Upper lobe of right lung (tissue), 1 donor: ENCODE measurements at regions of chr10 and their contacts with region 1.

Region 1: GRCh38 chr10:71957546-71958275 is 6.5 kb upstream of the CHST3 start:
- DNase-seq: no peak
- ATAC-seq: no peak
- H3K4me3 ChIP-seq: no peak overlapping the region
- H3K27ac ChIP-seq: no peak overlapping the region
- H3K4me1 ChIP-seq: peaks cover 3% of the 10 kb centered on the region
- H3K27me3 ChIP-seq: no peaks in the 10 kb centered on the region
- CTCF ChIP-seq: no peak

Region 2: GRCh38 chr10:72048450-72049124 is 90.9 kb after region 1 on chr10:
- intact Hi-C with region 1: loop called (anchors 5 kb)
- DNase-seq: peak; percentile 89
- ATAC-seq: peak; percentile 98
- H3K4me3 ChIP-seq: no peak overlapping the region
- H3K27ac ChIP-seq: no peak overlapping the region
- H3K4me1 ChIP-seq: peaks cover 5% of the 10 kb centered on the region
- H3K27me3 ChIP-seq: no peaks in the 10 kb centered on the region
- CTCF ChIP-seq: peak; percentile 100

Region 3: DNA sequence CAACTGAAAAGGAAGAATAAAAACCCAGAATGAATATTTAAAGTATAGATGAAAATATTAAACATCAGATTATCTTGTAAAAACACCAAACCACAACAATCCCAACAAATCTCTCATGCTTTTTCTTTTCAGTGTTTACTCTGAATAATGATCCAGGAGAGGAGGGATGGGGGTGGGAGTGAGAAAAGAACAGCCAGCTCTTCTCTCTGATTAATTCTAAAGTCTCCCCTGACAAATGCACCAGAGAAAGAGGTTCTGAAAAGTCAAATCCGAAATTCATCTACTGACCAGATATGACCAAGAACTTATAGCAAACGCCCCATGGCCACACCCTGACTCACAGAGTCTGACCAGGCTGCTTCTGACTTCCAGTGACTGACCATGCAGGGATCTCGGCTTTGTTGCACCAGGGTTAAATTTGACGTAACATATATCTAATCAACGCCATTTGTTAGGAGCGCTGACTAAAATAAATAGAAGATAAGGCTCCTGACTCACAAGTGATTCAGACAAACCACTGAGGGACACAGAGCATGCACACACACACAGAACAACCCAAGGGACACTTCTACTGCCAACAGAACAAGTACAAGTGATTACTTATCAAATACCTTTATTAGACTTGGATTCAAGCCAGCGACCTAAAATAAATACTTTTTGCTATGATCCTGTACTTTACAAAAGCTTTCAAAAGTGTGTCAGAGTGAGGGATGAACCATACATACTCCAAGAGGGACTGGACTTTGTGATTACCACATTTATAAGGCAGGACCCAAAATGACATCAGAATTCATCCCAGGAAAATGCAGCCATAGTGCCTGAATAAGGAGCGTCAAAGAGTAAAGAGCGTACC is 140.0 kb after region 1 on chr10:
- intact Hi-C with region 1: no loop called
- DNase-seq: no peak
- ATAC-seq: peak; percentile 72
- H3K4me3 ChIP-seq: no peak overlapping the region
- H3K27ac ChIP-seq: no peak overlapping the region
- H3K4me1 ChIP-seq: no peaks in the 10 kb centered on the region
- H3K27me3 ChIP-seq: no peaks in the 10 kb centered on the region
- CTCF ChIP-seq: no peak

Region 4: GRCh38 chr10:72340510-72341261 is 383.0 kb after region 1 on chr10:
- intact Hi-C with region 1: loop called (anchors 5 kb)
- DNase-seq: peak; percentile 88
- ATAC-seq: peak; percentile 80
- H3K4me3 ChIP-seq: no peak overlapping the region
- H3K27ac ChIP-seq: peak overlapping the region; percentile 53
- H3K4me1 ChIP-seq: peaks cover 28% of the 10 kb centered on the region
- H3K27me3 ChIP-seq: no peaks in the 10 kb centered on the region
- CTCF ChIP-seq: peak; percentile 96